Activated naive CD4-positive, alpha-beta T cell treated with anti-CD3 and anti-CD28 coated beads for 36 hours (primary cell): ENCODE measurements at regions of chr7 and their contacts with region 1.

Region 1: GRCh38 chr7:66183700-66184099 is 21.4 kb upstream of the TPST1 start:
- DNase-seq: no peak
- H3K4me3 Mint-ChIP-seq: no peak overlapping the region
- H3K27ac Mint-ChIP-seq: no peak overlapping the region
- H3K4me1 Mint-ChIP-seq: no peaks in the 10 kb centered on the region
- H3K27me3 Mint-ChIP-seq: peaks cover 2% of the 10 kb centered on the region

Region 2: GRCh38 chr7:65731562-65732035 is 452.1 kb before region 1 on chr7:
- CTCF ChIA-PET with region 1: interaction called, 10 read pairs
- intact Hi-C with region 1: no loop called
- DNase-seq: peak; percentile 25
- H3K4me3 Mint-ChIP-seq: no peak overlapping the region
- H3K27ac Mint-ChIP-seq: no peak overlapping the region
- H3K4me1 Mint-ChIP-seq: peaks cover 6% of the 10 kb centered on the region
- H3K27me3 Mint-ChIP-seq: no peaks in the 10 kb centered on the region

Region 3: GRCh38 chr7:65960351-65961074 is 223.2 kb before region 1 on chr7:
- CTCF ChIA-PET with region 1: no interaction called
- intact Hi-C with region 1: no loop called
- DNase-seq: no peak
- H3K4me3 Mint-ChIP-seq: no peak overlapping the region
- H3K27ac Mint-ChIP-seq: no peak overlapping the region
- H3K4me1 Mint-ChIP-seq: no peaks in the 10 kb centered on the region
- H3K27me3 Mint-ChIP-seq: no peaks in the 10 kb centered on the region

Region 4: DNA sequence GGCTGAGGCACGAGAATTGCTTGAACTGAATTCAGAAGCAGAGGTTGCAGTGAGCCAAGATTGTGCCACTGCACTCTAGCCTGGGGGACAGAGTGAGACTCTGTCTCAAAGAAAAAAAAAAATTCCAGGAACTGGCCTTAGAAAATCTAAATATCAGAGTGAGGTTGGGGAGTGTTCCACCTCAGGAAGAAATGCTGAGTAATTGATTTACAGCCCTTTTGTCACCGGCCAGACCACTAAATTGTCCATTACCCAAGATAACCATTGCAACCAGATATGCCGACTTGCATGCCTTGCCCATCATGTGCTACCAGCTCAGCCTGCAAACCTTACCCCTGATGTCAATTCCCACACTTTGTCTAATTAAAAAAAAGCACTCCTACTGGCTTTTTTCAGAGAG is 26.6 kb before region 1 on chr7:
- CTCF ChIA-PET with region 1: no interaction called
- intact Hi-C with region 1: no loop called
- DNase-seq: no peak
- H3K4me3 Mint-ChIP-seq: no peak overlapping the region
- H3K27ac Mint-ChIP-seq: no peak overlapping the region
- H3K4me1 Mint-ChIP-seq: no peaks in the 10 kb centered on the region
- H3K27me3 Mint-ChIP-seq: no peaks in the 10 kb centered on the region

Region 5: GRCh38 chr7:66170309-66171231 is 13.1 kb before region 1 on chr7:
- CTCF ChIA-PET with region 1: no interaction called
- intact Hi-C with region 1: no loop called
- DNase-seq: no peak
- H3K4me3 Mint-ChIP-seq: no peak overlapping the region
- H3K27ac Mint-ChIP-seq: no peak overlapping the region
- H3K4me1 Mint-ChIP-seq: peaks cover 5% of the 10 kb centered on the region
- H3K27me3 Mint-ChIP-seq: no peaks in the 10 kb centered on the region